Activated CD4-positive, alpha-beta T cell treated with anti-CD3 and anti-CD28 coated beads for 36 hours (primary cell): ENCODE measurements at regions of chr2 and their contacts with region 1.

Region 1: DNA sequence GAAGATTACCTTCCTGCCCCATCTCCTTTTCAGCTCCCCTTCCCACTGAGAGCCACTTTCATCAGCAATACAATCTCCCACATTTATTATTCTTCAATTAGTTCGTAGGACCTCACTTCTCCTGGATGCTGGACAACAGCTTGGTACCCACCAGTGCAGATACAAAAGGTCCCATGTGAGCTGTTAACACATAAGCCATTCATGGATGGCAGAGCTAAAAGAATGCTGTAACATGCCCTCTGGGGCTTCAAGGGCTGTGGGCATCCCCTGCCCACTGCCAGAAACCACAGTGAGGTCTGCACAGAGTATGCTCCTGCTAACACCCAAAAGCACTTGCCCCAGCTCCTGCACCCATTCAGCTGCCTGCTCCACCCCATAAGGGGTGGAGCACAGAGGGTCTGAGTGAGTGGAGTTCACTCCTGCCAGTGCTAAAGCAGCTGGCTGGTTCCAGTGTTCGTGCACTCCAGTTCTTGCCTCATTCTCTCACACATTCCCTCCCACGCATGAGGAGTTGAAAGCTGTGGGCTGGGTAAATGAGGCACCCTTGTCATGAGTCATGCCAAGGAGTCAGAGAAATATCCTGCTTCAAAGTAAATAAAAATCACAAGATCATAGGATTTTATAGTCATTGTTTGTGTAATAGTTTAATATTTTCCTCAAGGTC is 305.9 kb upstream of the TMEFF2 start:
- DNase-seq: peak; percentile 72
- ATAC-seq: peak; percentile 99
- H3K4me3 Mint-ChIP-seq: no peak overlapping the region
- H3K27ac Mint-ChIP-seq: no peak overlapping the region
- H3K4me1 Mint-ChIP-seq: peaks cover 6% of the 10 kb centered on the region
- H3K27me3 Mint-ChIP-seq: no peaks in the 10 kb centered on the region

Region 2: GRCh38 chr2:192515937-192516336 is 15.3 kb after region 1 on chr2:
- CTCF ChIA-PET with region 1: interaction called, 4 read pairs
- POLR2A ChIA-PET with region 1: no interaction called
- intact Hi-C with region 1: loop called in 1 of 2 experiments (anchors 1 kb)
- DNase-seq: no peak
- ATAC-seq: no peak
- H3K4me3 Mint-ChIP-seq: no peak overlapping the region
- H3K27ac Mint-ChIP-seq: no peak overlapping the region
- H3K4me1 Mint-ChIP-seq: no peaks in the 10 kb centered on the region
- H3K27me3 Mint-ChIP-seq: no peaks in the 10 kb centered on the region